Dorsolateral prefrontal cortex (tissue), 120 donors: ENCODE measurements at regions of chr11 and their contacts with region 1.

Region 1: GRCh38 chr11:86244522-86245368 is at the start of gene EED:
- DNase-seq: peak; percentile 83 to 96 (median 92)
- H3K4me3 ChIP-seq: peak within 1 kb of the TSS; percentile 63 to 98 (median 82)
- H3K27ac ChIP-seq: peak within 1 kb of the TSS; percentile 90 to 100 (median 99)
- H3K27me3 ChIP-seq: peaks cover 0 to 5% (median 0%) of the 10 kb centered on the region in 45 donors
- CTCF ChIP-seq: peak in 26 of 56 donors; percentile 3 to 38 (median 14)
- total RNA-seq, gene EED: 19.7 to 40.3 (median 29.2) TPM

Region 2: GRCh38 chr11:85682330-85683305 is 562.1 kb before region 1 on chr11:
- intact Hi-C with region 1: loop called in 1 of 2 experiments (anchors 10 kb)
- DNase-seq: peak; percentile 60 to 79 (median 63)
- H3K4me3 ChIP-seq: peak overlapping the region; percentile 43 to 78 (median 65)
- H3K27ac ChIP-seq: peak overlapping the region in 29 of 59 donors; percentile 7 to 87 (median 49)
- H3K27me3 ChIP-seq: no peaks in the 10 kb centered on the region
- CTCF ChIP-seq: no peak

Region 3: GRCh38 chr11:86291466-86292262 is 46.9 kb after region 1 on chr11:
- intact Hi-C with region 1: loop called in 1 of 2 experiments (anchors 5 kb)
- DNase-seq: peak in 5 of 10 donors; percentile 35 to 58 (median 49)
- H3K4me3 ChIP-seq: no peak overlapping the region
- H3K27ac ChIP-seq: no peak overlapping the region
- H3K27me3 ChIP-seq: no peaks in the 10 kb centered on the region
- CTCF ChIP-seq: peak; percentile 51 to 81 (median 72)

Region 4: GRCh38 chr11:86302100-86302793 is 57.5 kb after region 1 on chr11 and contains the start of gene HIKESHI:
- intact Hi-C with region 1: loop called (anchors 1 to 2 kb)
- DNase-seq: peak; percentile 99 to 100 (median 100)
- H3K4me3 ChIP-seq: peak within 1 kb of the TSS; percentile 68 to 99 (median 88)
- H3K27ac ChIP-seq: peak within 1 kb of the TSS; percentile 35 to 95 (median 86)
- H3K27me3 ChIP-seq: no peaks in the 10 kb centered on the region
- CTCF ChIP-seq: peak in 41 of 56 donors; percentile 5 to 58 (median 31)
- total RNA-seq, gene HIKESHI: 25.0 to 47.8 (median 34.2) TPM